IMR-90 (cell line): ENCODE measurements at regions of chr11 and their contacts with region 1.

Region 1: GRCh38 chr11:58629857-58630256 is 7.4 kb downstream of the CNTF start:
- DNase-seq: peak; percentile 71
- ATAC-seq: peak; percentile 24; the same call in 1 of the 2 replicates
- H3K4me3 ChIP-seq: no peak overlapping the region
- H3K27ac ChIP-seq: no peak overlapping the region
- H3K4me1 ChIP-seq: peaks cover 18% of the 10 kb centered on the region
- H3K27me3 ChIP-seq: no peaks in the 10 kb centered on the region
- CTCF ChIP-seq: peak; percentile 78
- POLR2A ChIP-seq: no peak
- RAD21 ChIP-seq: peak; percentile 64

Region 2: GRCh38 chr11:58567889-58568512 is 61.9 kb before region 1 on chr11:
- CTCF ChIA-PET with region 1: interaction called, 16 read pairs
- POLR2A ChIA-PET with region 1: no interaction called
- dilution Hi-C with region 1: no loop called
- in situ Hi-C with region 1: no loop called
- intact Hi-C with region 1: no loop called
- DNase-seq: peak; percentile 54
- ATAC-seq: peak; percentile 97
- H3K4me3 ChIP-seq: no peak overlapping the region
- H3K27ac ChIP-seq: no peak overlapping the region
- H3K4me1 ChIP-seq: peaks cover 2% of the 10 kb centered on the region
- H3K27me3 ChIP-seq: no peaks in the 10 kb centered on the region
- CTCF ChIP-seq: peak; percentile 80
- POLR2A ChIP-seq: no peak
- RAD21 ChIP-seq: peak; percentile 61

Region 3: GRCh38 chr11:58640386-58641023 is 10.6 kb after region 1 on chr11:
- CTCF ChIA-PET with region 1: interaction called, 11 read pairs
- POLR2A ChIA-PET with region 1: no interaction called
- dilution Hi-C with region 1: no loop called
- in situ Hi-C with region 1: no loop called
- intact Hi-C with region 1: no loop called
- DNase-seq: no peak
- ATAC-seq: no peak
- H3K4me3 ChIP-seq: no peak overlapping the region
- H3K27ac ChIP-seq: no peak overlapping the region
- H3K4me1 ChIP-seq: no peaks in the 10 kb centered on the region
- H3K27me3 ChIP-seq: peaks cover 4% of the 10 kb centered on the region; the same call in 1 of the 2 replicates
- CTCF ChIP-seq: no peak
- POLR2A ChIP-seq: no peak
- RAD21 ChIP-seq: no peak